ENCODE measurements at regions of chr6 and their contacts with region 1.

Region 1: DNA sequence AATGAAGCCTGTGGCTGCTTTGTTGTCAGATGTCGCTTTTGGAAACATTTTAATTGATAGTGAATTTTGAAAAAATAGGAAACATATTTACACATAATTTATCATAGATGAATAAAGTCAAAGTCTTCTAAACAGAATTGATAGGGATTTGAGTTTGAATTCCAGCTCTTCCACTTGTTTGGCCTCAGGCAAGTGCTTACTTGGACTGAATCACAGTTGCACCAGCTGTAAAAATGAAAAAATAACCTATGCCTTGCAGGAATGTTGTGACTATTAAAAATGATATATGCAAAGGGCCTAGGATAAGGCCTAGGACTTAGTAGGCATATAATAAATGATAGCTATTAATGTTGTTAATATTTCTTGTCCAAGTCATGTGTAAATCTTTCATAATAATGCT is 618.5 kb upstream of the MMS22L start:
- DNase-seq: no peak
- ATAC-seq: no peak
- H3K4me3 ChIP-seq: no peak overlapping the region
- H3K4me3 Mint-ChIP-seq: no peak overlapping the region
- H3K27ac ChIP-seq: no peak overlapping the region
- H3K27ac Mint-ChIP-seq: no peak overlapping the region
- H3K4me1 ChIP-seq: no peaks in the 10 kb centered on the region
- H3K4me1 Mint-ChIP-seq: no peaks in the 10 kb centered on the region
- H3K27me3 ChIP-seq: no peaks in the 10 kb centered on the region
- H3K27me3 Mint-ChIP-seq: no peaks in the 10 kb centered on the region
- CTCF ChIP-seq: no peak

Region 2: GRCh38 chr6:97885828-97886227 is 15.7 kb before region 1 on chr6:
- CTCF ChIA-PET with region 1: no interaction called
- POLR2A ChIA-PET with region 1: no interaction called
- intact Hi-C with region 1: loop called in 1 of 2 experiments (anchors 1 kb)
- DNase-seq: no peak
- ATAC-seq: no peak
- H3K4me3 ChIP-seq: no peak overlapping the region
- H3K4me3 Mint-ChIP-seq: no peak overlapping the region
- H3K27ac ChIP-seq: no peak overlapping the region
- H3K27ac Mint-ChIP-seq: no peak overlapping the region
- H3K4me1 ChIP-seq: no peaks in the 10 kb centered on the region
- H3K4me1 Mint-ChIP-seq: no peaks in the 10 kb centered on the region
- H3K27me3 ChIP-seq: no peaks in the 10 kb centered on the region
- H3K27me3 Mint-ChIP-seq: no peaks in the 10 kb centered on the region
- CTCF ChIP-seq: no peak